ENCODE measurements at regions of chrX and their contacts with region 1.

Region 1: GRCh38 chrX:72126539-72127140 is 5.1 kb downstream of the RTL5 start:
- DNase-seq: peak; percentile 93
- H3K4me3 ChIP-seq: no peak overlapping the region
- H3K27ac ChIP-seq: peak overlapping the region in 4 of 8 donors; percentile 21 to 88 (median 47)
- H3K4me1 ChIP-seq: peaks cover 0 to 71% (median 43%) of the 10 kb centered on the region in 6 donors
- H3K27me3 ChIP-seq: peaks cover 0 to 42% (median 3%) of the 10 kb centered on the region in 7 donors
- CTCF ChIP-seq: peak; percentile 79 to 94 (median 89)
- POLR2A ChIP-seq: no peak

Region 2: DNA sequence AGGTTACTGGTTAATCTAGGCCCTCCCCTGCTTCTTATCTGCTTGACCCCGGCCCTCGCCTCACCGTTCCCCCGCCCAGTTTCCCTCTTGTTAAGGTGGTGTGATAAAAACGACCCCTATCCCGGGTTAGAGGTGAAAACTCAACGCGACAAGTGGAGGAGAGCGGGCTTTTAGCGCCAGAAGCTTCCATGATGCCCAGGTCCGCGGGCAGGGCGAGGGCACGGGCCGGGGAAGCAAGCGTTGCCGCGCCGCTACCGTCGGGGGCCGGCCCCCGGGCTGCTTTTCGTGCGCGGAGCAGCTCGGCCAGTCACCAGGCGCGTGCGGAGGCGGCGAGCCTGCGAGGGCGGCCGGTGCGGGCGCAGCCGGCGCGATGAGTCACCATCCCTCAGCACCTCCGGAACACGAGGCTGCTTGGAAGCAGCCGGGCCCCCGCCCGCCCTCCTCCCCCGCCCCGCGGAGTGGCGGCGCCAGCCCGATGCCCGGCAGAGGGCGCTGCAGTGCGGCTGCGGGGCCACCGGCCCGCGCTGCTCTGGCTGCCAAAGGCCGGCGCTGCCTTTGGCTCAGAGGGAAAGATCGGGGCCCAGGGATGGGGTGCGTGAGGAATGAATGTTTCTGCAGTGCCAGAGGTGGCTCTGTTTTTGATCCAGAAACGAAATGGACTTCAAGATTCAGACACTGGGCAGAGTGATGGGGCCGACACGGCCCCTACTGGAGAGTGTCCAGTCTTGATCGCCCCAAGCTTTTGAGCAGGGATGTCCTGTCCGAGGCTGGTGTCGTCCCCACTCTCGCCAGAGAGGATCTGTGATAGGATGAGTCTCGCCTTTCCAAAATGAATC is 108.1 kb before region 1 on chrX:
- intact Hi-C with region 1: loop called (anchors 5 kb)
- DNase-seq: peak; percentile 94
- H3K4me3 ChIP-seq: peak overlapping the region in 2 of 8 donors; percentile 18 to 52
- H3K27ac ChIP-seq: peak overlapping the region in 3 of 8 donors; percentile 13 to 62 (median 36)
- H3K4me1 ChIP-seq: peaks cover 0 to 29% (median 8%) of the 10 kb centered on the region in 6 donors
- H3K27me3 ChIP-seq: peaks cover 0 to 34% (median 6%) of the 10 kb centered on the region in 7 donors
- CTCF ChIP-seq: peak in 10 of 11 experiments; percentile 29 to 94 (median 86)
- POLR2A ChIP-seq: no peak